Activated CD4-positive, alpha-beta T cell treated with anti-CD3 and anti-CD28 coated beads, Interleukin-2, amount 10 ng/mL, durations not matched to agents 24 days and 14 days (primary cell): ENCODE measurements at regions of chr14 and their contacts with region 1.

Region 1: GRCh38 chr14:77862154-77862786 is 62.4 kb downstream of the ADCK1 start:
- DNase-seq: peak; percentile 93
- H3K4me3 Mint-ChIP-seq: no peak overlapping the region
- H3K27ac Mint-ChIP-seq: no peak overlapping the region
- H3K4me1 Mint-ChIP-seq: no peaks in the 10 kb centered on the region
- H3K27me3 Mint-ChIP-seq: no peaks in the 10 kb centered on the region

Region 2: DNA sequence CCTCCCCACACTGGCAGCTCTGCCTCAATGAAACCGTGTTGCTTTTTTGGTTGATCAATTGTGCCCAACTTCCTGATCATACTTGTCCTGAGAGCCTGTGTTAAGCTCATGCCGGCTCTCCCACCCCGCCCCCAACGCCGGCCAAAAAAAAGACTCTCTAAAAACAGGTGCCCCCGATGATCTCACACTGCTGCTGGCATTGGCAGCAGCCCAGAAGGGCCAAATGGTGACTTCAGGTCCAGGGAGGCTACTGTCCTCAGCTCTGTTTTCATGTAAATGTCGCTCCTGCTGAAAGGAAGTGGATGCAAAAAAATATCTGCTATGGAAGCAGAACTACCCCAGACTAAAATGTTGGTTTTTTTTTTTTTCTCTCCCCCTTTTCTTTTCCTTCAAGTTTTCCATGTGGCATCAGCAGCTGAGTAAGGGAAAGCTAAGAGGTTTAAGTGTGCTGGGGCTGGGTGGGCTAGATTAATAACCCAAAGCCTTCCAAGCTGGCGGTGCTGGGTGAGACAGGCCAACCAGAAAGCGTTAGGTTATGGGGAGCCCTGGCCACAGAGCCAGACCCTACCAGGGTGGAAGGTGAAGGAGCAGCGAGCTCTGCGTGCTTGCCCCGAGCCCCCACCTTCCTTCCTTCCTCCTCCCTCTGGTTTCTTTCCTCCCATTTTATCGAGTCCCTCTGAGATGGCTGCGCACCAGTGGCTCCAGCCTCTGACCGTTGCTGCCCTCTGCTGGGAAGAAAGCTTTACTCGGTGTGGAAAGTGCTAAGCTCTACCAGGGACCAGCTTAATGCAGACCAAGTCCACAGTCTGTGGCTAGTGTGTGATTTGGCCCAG is 704.0 kb after region 1 on chr14:
- intact Hi-C with region 1: loop called (anchors 2 kb)
- DNase-seq: peak; percentile 87
- H3K4me3 Mint-ChIP-seq: peak overlapping the region; percentile 28
- H3K27ac Mint-ChIP-seq: no peak overlapping the region
- H3K4me1 Mint-ChIP-seq: peaks cover 3% of the 10 kb centered on the region
- H3K27me3 Mint-ChIP-seq: no peaks in the 10 kb centered on the region